ENCODE measurements at regions of chr2 and their contacts with region 1.

Region 1: DNA sequence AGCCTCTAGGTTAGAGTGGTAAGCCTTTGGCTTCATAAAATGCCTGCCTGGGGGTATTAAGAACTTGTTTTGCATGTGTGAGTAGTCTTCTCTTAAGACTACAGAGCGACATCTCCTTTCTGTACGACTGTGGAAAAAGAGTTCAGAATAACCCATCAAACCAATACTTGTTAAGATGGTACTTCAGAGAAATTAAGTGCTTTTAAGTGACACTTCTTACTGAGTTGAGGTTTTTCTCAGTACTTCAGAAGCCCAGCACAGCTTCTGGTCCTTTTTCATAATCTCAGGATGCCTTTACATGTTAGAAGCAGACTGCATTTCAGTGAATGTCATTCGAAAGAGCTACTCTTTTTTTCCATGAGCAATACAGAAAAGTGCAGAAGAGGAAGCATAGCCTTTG is 10.8 kb downstream of the XRCC5 start:
- DNase-seq: no peak
- H3K4me3 Mint-ChIP-seq: peak overlapping the region; percentile 55
- H3K27ac Mint-ChIP-seq: peak overlapping the region; percentile 97
- H3K4me1 Mint-ChIP-seq: peaks cover 55% of the 10 kb centered on the region
- H3K27me3 Mint-ChIP-seq: no peaks in the 10 kb centered on the region

Region 2: DNA sequence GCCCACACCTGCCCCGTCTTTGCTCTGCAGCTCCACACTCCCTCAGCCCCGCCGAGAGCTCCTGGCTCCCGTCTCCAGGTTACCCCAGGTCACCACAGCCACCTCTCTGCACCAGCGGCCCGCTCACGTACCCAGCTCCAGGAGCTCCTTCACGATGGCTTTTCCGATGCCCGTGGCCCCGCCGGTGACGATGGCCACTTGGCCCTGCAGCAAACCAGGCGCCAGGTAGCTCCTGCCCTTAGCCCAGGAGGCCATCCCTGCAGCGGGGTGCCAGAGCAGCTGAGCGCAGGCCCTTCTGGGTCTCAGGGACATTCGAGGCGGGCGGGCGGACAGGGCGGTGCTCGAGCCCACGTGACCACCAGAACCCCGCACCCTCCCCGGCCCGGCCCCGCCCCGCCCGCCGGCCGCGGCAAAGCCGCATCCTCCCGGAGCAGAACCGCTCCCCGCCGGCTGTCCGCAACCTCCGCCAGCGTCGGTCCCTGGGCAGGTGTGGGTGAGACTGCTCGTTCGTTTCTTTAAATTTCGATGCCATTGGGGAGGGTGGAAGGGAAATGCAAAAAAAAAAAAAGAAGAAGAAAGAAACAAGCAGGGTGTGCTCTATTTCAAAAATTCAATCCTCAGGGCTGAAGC is 38.4 kb before region 1 on chr2 and contains the starts of genes PECR and TMEM169:
- intact Hi-C with region 1: loop called (anchors 5 kb)
- DNase-seq: peak; percentile 73
- H3K4me3 Mint-ChIP-seq: peak within 1 kb of the TSS; percentile 92
- H3K27ac Mint-ChIP-seq: peak within 1 kb of the TSS; percentile 81
- H3K4me1 Mint-ChIP-seq: peaks cover 46% of the 10 kb centered on the region
- H3K27me3 Mint-ChIP-seq: no peaks in the 10 kb centered on the region
- total RNA-seq, gene PECR: 11.5 and 15.2 TPM in 2 replicates
- total RNA-seq, gene TMEM169: 1.3 and 1.6 TPM in 2 replicates

Region 3: GRCh38 chr2:216132560-216133145 is 12.7 kb after region 1 on chr2:
- intact Hi-C with region 1: loop called (anchors 1 kb)
- DNase-seq: no peak
- H3K4me3 Mint-ChIP-seq: no peak overlapping the region
- H3K27ac Mint-ChIP-seq: peak overlapping the region; percentile 74
- H3K4me1 Mint-ChIP-seq: peaks cover 59% of the 10 kb centered on the region
- H3K27me3 Mint-ChIP-seq: no peaks in the 10 kb centered on the region

Region 4: GRCh38 chr2:216188956-216189355 is 69.0 kb after region 1 on chr2:
- intact Hi-C with region 1: loop called (anchors 5 kb)
- DNase-seq: no peak
- H3K4me3 Mint-ChIP-seq: no peak overlapping the region
- H3K27ac Mint-ChIP-seq: peak overlapping the region; percentile 54
- H3K4me1 Mint-ChIP-seq: peaks cover 51% of the 10 kb centered on the region
- H3K27me3 Mint-ChIP-seq: no peaks in the 10 kb centered on the region

Region 5: GRCh38 chr2:216350214-216350789 is 230.3 kb after region 1 on chr2:
- intact Hi-C with region 1: loop called (anchors 5 kb)
- DNase-seq: peak; percentile 24
- H3K4me3 Mint-ChIP-seq: no peak overlapping the region
- H3K27ac Mint-ChIP-seq: peak overlapping the region; percentile 67
- H3K4me1 Mint-ChIP-seq: peaks cover 68% of the 10 kb centered on the region
- H3K27me3 Mint-ChIP-seq: no peaks in the 10 kb centered on the region

Measured in activated T-helper 2 cell treated with anti-CD3 and anti-CD28 coated beads, Interferon-gamma antibody, Interleukin-2, Interleukin-4, amounts not matched to agents 10 μg/mL and 5 μg/mL and 100 μg/mL, durations not matched to agents 14 hours and 24 hours and 36 hours (primary cell).